ENCODE measurements at regions of chr2 and their contacts with region 1.

Region 1: GRCh38 chr2:26846328-26847306 is 1.3 kb upstream of the DPYSL5 start:
- DNase-seq: peak; percentile 58
- H3K4me3 ChIP-seq: no peak overlapping the region
- H3K27ac ChIP-seq: no peak overlapping the region
- H3K4me1 ChIP-seq: peaks cover 4% of the 10 kb centered on the region
- H3K27me3 ChIP-seq: peaks cover 56 to 74% of the 10 kb centered on the region in 2 experiments
- CTCF ChIP-seq: peak; percentile 65 to 72
- POLR2A ChIP-seq: no peak

Region 2: DNA sequence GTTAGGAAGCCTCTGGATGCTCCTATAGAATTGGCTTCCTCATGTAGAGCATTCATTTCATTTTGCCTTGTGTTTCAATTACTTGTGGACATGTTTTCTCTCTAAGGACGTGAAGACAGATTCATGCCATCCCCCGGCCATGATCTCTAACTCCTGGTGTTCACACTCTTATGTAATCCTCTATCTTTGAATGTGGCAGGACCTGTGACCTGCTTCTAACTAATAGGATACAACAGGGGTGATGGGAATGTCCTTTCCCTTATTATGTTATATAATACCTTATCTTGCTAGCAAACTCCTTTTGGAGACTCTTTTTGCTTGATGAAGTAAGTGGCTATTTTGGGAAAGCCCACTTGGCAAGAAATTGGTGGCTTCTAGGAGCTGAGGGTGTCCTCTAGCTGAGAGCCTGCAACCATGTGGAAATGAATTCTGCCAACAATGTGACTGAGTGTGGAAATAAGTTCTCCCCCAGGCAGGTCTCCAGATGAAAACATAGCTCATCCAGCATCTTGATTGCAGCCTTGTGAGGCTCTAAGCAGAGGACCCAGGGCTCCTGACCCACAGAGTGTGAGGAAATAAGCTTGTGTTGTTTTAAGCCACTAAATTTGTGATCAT is 15.1 kb after region 1 on chr2:
- CTCF ChIA-PET with region 1: interaction called, 35 read pairs
- POLR2A ChIA-PET with region 1: no interaction called
- dilution Hi-C with region 1: no loop called
- intact Hi-C with region 1: no loop called
- DNase-seq: no peak
- H3K4me3 ChIP-seq: no peak overlapping the region
- H3K27ac ChIP-seq: no peak overlapping the region
- H3K4me1 ChIP-seq: no peaks in the 10 kb centered on the region
- H3K27me3 ChIP-seq: peaks cover 20 to 38% of the 10 kb centered on the region in 2 experiments
- CTCF ChIP-seq: no peak
- POLR2A ChIP-seq: no peak

Region 3: GRCh38 chr2:26942543-26943295 is 96.1 kb after region 1 on chr2:
- CTCF ChIA-PET with region 1: interaction called, 210 read pairs
- POLR2A ChIA-PET with region 1: no interaction called
- dilution Hi-C with region 1: no loop called
- intact Hi-C with region 1: loop called (anchors 1 kb)
- DNase-seq: peak; percentile 46
- H3K4me3 ChIP-seq: no peak overlapping the region
- H3K27ac ChIP-seq: no peak overlapping the region
- H3K4me1 ChIP-seq: no peaks in the 10 kb centered on the region
- H3K27me3 ChIP-seq: peaks cover 3 to 4% of the 10 kb centered on the region in 2 experiments
- CTCF ChIP-seq: peak; percentile 78
- POLR2A ChIP-seq: no peak

Region 4: GRCh38 chr2:26959331-26959730 is 112.7 kb after region 1 on chr2:
- CTCF ChIA-PET with region 1: interaction called, 17 read pairs
- POLR2A ChIA-PET with region 1: no interaction called
- dilution Hi-C with region 1: no loop called
- intact Hi-C with region 1: no loop called
- DNase-seq: no peak
- H3K4me3 ChIP-seq: no peak overlapping the region
- H3K27ac ChIP-seq: no peak overlapping the region
- H3K4me1 ChIP-seq: no peaks in the 10 kb centered on the region
- H3K27me3 ChIP-seq: peaks cover 19 to 33% of the 10 kb centered on the region in 2 experiments
- CTCF ChIP-seq: no peak
- POLR2A ChIP-seq: no peak

Region 5: GRCh38 chr2:27071277-27071989 is 224.8 kb after region 1 on chr2 and contains the start of gene OST4:
- CTCF ChIA-PET with region 1: interaction called, 3 read pairs
- POLR2A ChIA-PET with region 1: no interaction called
- dilution Hi-C with region 1: no loop called
- intact Hi-C with region 1: loop called (anchors 2 kb)
- DNase-seq: peak; percentile 92
- H3K4me3 ChIP-seq: peak within 1 kb of the TSS; percentile 41 to 85 (median 68)
- H3K27ac ChIP-seq: peak within 1 kb of the TSS; percentile 76
- H3K4me1 ChIP-seq: peaks cover 17% of the 10 kb centered on the region
- H3K27me3 ChIP-seq: no peaks in the 10 kb centered on the region
- CTCF ChIP-seq: no peak
- POLR2A ChIP-seq: peak; percentile 93
- total RNA-seq, gene OST4: 415 TPM in 2 replicates

Region 6: GRCh38 chr2:27191053-27191829 is 344.6 kb after region 1 on chr2:
- CTCF ChIA-PET with region 1: interaction called, 20 read pairs
- POLR2A ChIA-PET with region 1: no interaction called
- dilution Hi-C with region 1: no loop called
- intact Hi-C with region 1: no loop called
- DNase-seq: peak; percentile 73
- H3K4me3 ChIP-seq: no peak overlapping the region
- H3K27ac ChIP-seq: no peak overlapping the region
- H3K4me1 ChIP-seq: no peaks in the 10 kb centered on the region
- H3K27me3 ChIP-seq: peaks cover 2 to 3% of the 10 kb centered on the region in 2 experiments
- CTCF ChIP-seq: peak; percentile 48 to 65
- POLR2A ChIP-seq: no peak